PC-3 (cell line): ENCODE measurements at regions of chr2 and their contacts with region 1.

Region 1: DNA sequence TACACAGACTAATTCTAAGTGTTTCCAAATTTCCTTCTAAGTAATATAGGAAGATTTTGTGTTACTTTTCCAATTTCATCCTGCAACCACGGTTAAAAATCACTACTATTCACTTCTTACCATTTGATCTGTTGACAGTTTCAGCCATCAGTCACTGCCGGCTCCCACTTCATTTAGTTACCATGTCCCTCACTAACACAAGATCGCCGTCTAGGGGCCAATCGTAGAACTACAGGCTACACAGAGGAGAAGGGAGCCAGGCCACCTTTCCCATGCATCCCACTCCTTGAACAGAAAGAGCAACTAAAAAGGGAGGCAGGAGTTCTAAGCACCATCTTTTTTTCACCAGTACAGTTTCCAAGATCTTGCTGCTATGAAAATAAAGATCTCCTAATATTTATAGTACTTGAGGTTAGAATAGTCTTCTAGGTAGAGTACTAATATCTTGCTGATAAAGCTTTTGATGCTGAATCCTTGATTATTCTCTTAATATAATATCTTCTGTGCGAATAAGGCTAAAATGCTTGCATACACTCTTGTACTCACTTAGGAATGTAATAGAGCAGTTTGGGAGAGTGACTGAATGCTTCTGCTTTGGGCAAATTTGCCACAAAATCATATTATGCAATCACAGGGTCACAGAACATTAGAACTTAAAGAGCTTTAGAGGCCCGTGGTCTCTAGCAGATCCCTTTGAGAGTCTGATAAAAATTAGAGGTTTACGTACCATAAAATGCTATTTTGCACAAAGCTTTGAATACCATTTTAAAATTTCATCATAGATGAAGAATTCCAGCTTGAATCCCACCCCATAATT is 39.5 kb upstream of the CYP1B1 start:
- DNase-seq: peak; percentile 96
- ATAC-seq: peak; percentile 88
- H3K4me3 ChIP-seq: no peak overlapping the region
- H3K27ac ChIP-seq: peak overlapping the region; percentile 6; the same call in 1 of the 2 replicates
- H3K4me1 ChIP-seq: peaks cover 16% of the 10 kb centered on the region
- H3K27me3 ChIP-seq: no peaks in the 10 kb centered on the region
- CTCF ChIP-seq: peak; percentile 95

Region 2: GRCh38 chr2:37890893-37891495 is 224.4 kb before region 1 on chr2:
- CTCF ChIA-PET with region 1: interaction called, 10 read pairs
- POLR2A ChIA-PET with region 1: no interaction called
- intact Hi-C with region 1: no loop called
- DNase-seq: peak; percentile 89
- ATAC-seq: peak; percentile 97
- H3K4me3 ChIP-seq: no peak overlapping the region
- H3K27ac ChIP-seq: no peak overlapping the region
- H3K4me1 ChIP-seq: no peaks in the 10 kb centered on the region
- H3K27me3 ChIP-seq: no peaks in the 10 kb centered on the region
- CTCF ChIP-seq: peak; percentile 87

Region 3: GRCh38 chr2:37982147-37982582 is 133.3 kb before region 1 on chr2:
- CTCF ChIA-PET with region 1: no interaction called
- POLR2A ChIA-PET with region 1: no interaction called
- intact Hi-C with region 1: loop called (anchors 1 kb)
- DNase-seq: peak; percentile 79
- ATAC-seq: peak; percentile 42; the same call in 1 of the 2 replicates
- H3K4me3 ChIP-seq: no peak overlapping the region
- H3K27ac ChIP-seq: no peak overlapping the region
- H3K4me1 ChIP-seq: 0 out of 2 replicates have a peak, but pooled peaks cover 6% of the 10 kb centered on the region
- H3K27me3 ChIP-seq: no peaks in the 10 kb centered on the region
- CTCF ChIP-seq: peak; percentile 94

Region 4: GRCh38 chr2:37993143-37993542 is 122.3 kb before region 1 on chr2:
- CTCF ChIA-PET with region 1: no interaction called
- POLR2A ChIA-PET with region 1: no interaction called
- intact Hi-C with region 1: loop called (anchors 1 kb)
- DNase-seq: peak; percentile 60
- ATAC-seq: peak; percentile 63
- H3K4me3 ChIP-seq: no peak overlapping the region
- H3K27ac ChIP-seq: no peak overlapping the region
- H3K4me1 ChIP-seq: 0 out of 2 replicates have a peak, but pooled peaks cover 4% of the 10 kb centered on the region
- H3K27me3 ChIP-seq: no peaks in the 10 kb centered on the region
- CTCF ChIP-seq: peak; percentile 60

Region 5: GRCh38 chr2:38076606-38077430 is 38.6 kb before region 1 on chr2:
- CTCF ChIA-PET with region 1: no interaction called
- POLR2A ChIA-PET with region 1: interaction called, 3 read pairs
- intact Hi-C with region 1: loop called (anchors 5 kb)
- DNase-seq: peak; percentile 84
- ATAC-seq: peak; percentile 44
- H3K4me3 ChIP-seq: peak overlapping the region; percentile 69
- H3K27ac ChIP-seq: peak overlapping the region; percentile 85
- H3K4me1 ChIP-seq: peaks cover 27% of the 10 kb centered on the region
- H3K27me3 ChIP-seq: peaks cover 34% of the 10 kb centered on the region
- CTCF ChIP-seq: peak; percentile 65